Heart left ventricle (tissue), 16 donors: ENCODE measurements at regions of chr4 and their contacts with region 1.

Region 1: DNA sequence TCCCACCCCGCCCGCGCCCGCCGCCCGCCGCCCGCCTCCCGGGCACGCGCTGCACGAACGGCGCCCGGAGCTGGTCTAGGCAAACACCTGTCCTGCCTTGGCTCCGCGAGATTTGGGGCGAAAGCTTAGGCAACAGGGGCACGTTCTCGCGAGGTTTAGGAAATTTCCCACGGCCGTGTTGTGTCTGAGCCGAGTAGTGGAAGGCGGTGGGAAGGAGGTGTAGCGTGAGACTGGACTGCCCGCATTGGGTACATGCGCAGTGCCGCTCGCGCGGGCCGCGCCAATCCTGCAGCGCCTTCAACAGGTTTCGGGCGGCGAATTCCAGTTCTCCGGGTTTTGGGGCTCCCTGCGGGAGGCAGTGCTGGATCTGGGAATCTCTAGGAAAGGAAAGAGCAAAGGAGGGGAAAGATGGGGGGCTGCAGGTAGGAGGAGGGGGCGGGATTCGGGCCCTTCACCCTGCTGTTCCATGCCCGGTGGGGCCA is 1.3 kb upstream of the RBPJ start:
- DNase-seq: peak; percentile 97 to 98 (median 98)
- ATAC-seq: peak; percentile 93 to 95 (median 94)
- H3K4me3 ChIP-seq: peak overlapping the region; percentile 44 to 92 (median 74)
- H3K27ac ChIP-seq: peak overlapping the region; percentile 63 to 97 (median 92)
- H3K4me1 ChIP-seq: peaks cover 0 to 39% (median 28%) of the 10 kb centered on the region in 12 donors
- H3K27me3 ChIP-seq: no peaks in the 10 kb centered on the region
- CTCF ChIP-seq: peak in 5 of 12 donors; percentile 6 to 31 (median 20)
- POLR2A ChIP-seq: peak in 1 of 2 donors; percentile 29

Region 2: GRCh38 chr4:25913851-25914669 is 405.4 kb before region 1 on chr4 and contains the start of gene SMIM20:
- intact Hi-C with region 1: loop called in 1 of 10 experiments (anchors 10 kb)
- DNase-seq: peak; percentile 92 to 95 (median 94)
- ATAC-seq: peak; percentile 97 to 99 (median 98)
- H3K4me3 ChIP-seq: peak within 1 kb of the TSS; percentile 45 to 94 (median 76)
- H3K27ac ChIP-seq: peak within 1 kb of the TSS; percentile 60 to 95 (median 90)
- H3K4me1 ChIP-seq: peaks cover 2 to 23% (median 15%) of the 10 kb centered on the region in 12 donors
- H3K27me3 ChIP-seq: no peaks in the 10 kb centered on the region
- CTCF ChIP-seq: peak in 1 of 12 donors; percentile 5
- POLR2A ChIP-seq: peak in 1 of 2 donors; percentile 69
- total RNA-seq, gene SMIM20: 27.4 to 50.8 (median 37.2) TPM

Region 3: GRCh38 chr4:25938787-25939186 is 380.7 kb before region 1 on chr4:
- intact Hi-C with region 1: loop called in 1 of 10 experiments (anchors 10 kb)
- DNase-seq: peak in 4 of 5 donors; percentile 48 to 73 (median 61)
- ATAC-seq: peak; percentile 39 to 90 (median 78)
- H3K4me3 ChIP-seq: no peak overlapping the region
- H3K27ac ChIP-seq: peak overlapping the region in 3 of 12 donors; percentile 25 to 60 (median 35)
- H3K4me1 ChIP-seq: peaks cover 0 to 22% (median 9%) of the 10 kb centered on the region in 12 donors
- H3K27me3 ChIP-seq: no peaks in the 10 kb centered on the region
- CTCF ChIP-seq: no peak
- POLR2A ChIP-seq: no peak

Region 4: GRCh38 chr4:26028793-26029567 is 290.5 kb before region 1 on chr4:
- intact Hi-C with region 1: loop called in 1 of 10 experiments (anchors 5 kb)
- DNase-seq: peak; percentile 65 to 89 (median 74)
- ATAC-seq: peak; percentile 30 to 95 (median 94)
- H3K4me3 ChIP-seq: peak overlapping the region in 7 of 12 donors; percentile 12 to 35 (median 27)
- H3K27ac ChIP-seq: peak overlapping the region in 1 of 12 donors; percentile 25
- H3K4me1 ChIP-seq: peaks cover 0 to 37% (median 10%) of the 10 kb centered on the region in 12 donors
- H3K27me3 ChIP-seq: peaks cover 0 to 13% (median 0%) of the 10 kb centered on the region in 9 donors
- CTCF ChIP-seq: peak; percentile 60 to 80 (median 69)
- POLR2A ChIP-seq: no peak

Region 5: DNA sequence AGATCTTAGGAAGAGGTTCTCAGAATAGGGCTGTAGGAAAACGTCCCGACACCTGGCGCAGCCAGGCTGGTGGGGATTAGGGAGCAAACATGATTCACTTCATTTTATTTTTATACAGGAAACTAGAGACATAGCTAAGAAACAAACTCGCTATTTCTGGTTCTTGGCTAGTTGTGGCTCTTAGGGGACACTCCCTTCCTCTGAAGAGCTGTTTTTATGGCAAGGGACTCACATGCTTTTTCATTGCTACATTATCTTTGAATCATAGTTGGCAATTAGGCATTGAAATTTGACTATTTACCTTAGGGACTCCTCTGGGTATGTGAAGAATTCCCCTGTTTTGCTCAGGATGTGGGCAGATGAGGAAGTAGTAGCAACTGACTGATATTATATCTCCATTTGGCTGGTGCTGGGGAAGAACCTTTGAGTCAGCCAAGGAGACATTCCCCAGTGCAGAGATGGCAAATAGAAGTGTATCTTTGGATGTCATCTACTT is 231.0 kb before region 1 on chr4:
- intact Hi-C with region 1: loop called in 6 of 10 experiments (anchors 5 to 10 kb)
- DNase-seq: no peak
- ATAC-seq: peak in 3 of 4 donors; percentile 56 to 61 (median 57)
- H3K4me3 ChIP-seq: no peak overlapping the region
- H3K27ac ChIP-seq: peak overlapping the region in 3 of 12 donors; percentile 21 to 54 (median 39)
- H3K4me1 ChIP-seq: peaks cover 0 to 33% (median 9%) of the 10 kb centered on the region in 12 donors
- H3K27me3 ChIP-seq: no peaks in the 10 kb centered on the region
- CTCF ChIP-seq: no peak
- POLR2A ChIP-seq: no peak

Region 6: GRCh38 chr4:26719954-26720552 is 400.5 kb after region 1 on chr4:
- intact Hi-C with region 1: loop called in 1 of 10 experiments (anchors 10 kb)
- DNase-seq: no peak
- ATAC-seq: no peak
- H3K4me3 ChIP-seq: no peak overlapping the region
- H3K27ac ChIP-seq: no peak overlapping the region
- H3K4me1 ChIP-seq: peaks cover 0 to 2% (median 0%) of the 10 kb centered on the region in 12 donors
- H3K27me3 ChIP-seq: no peaks in the 10 kb centered on the region
- CTCF ChIP-seq: peak; percentile 38 to 79 (median 56)
- POLR2A ChIP-seq: no peak